BJ (cell line): ENCODE measurements at regions of chr12 and their contacts with region 1.

Region 1: DNA sequence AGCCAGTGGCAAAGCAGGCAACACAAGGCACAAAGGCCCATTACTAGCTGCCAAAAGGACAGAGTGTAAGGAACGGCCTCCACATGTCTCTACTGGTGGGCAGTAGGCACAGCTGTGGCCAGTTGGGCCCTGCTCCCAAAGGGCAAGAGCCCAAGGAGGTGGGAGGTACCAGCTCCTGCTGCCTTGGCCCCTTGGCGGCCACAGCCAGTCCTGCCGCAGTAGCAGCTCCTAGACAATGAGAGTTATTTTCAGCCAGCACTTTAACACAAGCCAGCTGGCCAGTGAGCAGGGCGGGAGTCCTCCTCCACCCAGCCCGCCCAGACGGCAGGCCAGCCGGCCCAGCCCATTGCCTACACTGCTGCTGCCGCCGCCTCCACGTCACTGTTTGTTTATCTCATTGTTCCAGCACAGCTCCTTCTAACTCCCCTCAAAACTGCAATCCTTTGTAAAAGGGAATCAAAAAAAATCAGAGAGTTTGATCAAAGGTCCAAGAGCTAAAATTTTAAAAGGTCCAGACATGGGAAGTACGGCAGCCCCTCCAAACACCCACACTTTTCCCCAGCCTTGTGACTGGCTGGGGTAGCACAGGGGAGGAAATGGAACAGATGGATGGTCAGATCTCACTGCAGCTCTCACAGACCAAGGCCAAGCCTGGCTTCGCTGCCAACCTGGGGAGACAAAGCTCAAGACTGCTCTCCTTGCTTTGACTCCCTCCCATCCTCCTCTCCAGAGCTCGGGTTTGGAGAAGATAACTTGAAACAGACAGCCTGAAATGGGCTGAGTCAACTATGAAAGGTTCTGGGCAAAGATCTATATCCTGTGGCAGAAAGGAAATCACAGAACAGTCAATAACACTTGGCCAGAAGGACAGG is 33.5 kb downstream of the FMNL3 start:
- DNase-seq: peak; percentile 73
- H3K4me3 ChIP-seq: no peak overlapping the region
- H3K27me3 ChIP-seq: no peaks in the 10 kb centered on the region
- CTCF ChIP-seq: peak; percentile 42

Region 2: DNA sequence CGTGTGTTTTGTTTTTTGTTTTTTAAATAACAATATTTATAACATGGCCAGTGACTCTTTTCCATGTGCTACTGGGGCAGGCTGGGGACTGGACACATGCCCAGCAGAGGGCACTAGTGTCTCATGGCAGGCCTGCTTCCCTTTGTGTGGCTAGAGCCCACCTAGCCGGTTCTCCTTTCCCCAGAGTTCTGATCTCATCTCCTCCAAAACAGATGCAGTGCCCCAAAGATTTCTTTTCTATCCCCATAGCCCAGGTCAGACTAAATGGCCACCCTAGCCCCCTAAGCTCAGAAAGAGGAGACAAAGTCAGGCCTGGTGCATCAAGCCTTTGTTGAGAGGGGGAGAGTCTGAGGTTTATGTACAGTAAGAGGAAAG is 29.1 kb before region 1 on chr12:
- CTCF ChIA-PET with region 1: interaction called, 23 read pairs
- POLR2A ChIA-PET with region 1: no interaction called
- DNase-seq: no peak
- H3K4me3 ChIP-seq: no peak overlapping the region
- H3K27me3 ChIP-seq: no peaks in the 10 kb centered on the region
- CTCF ChIP-seq: peak; percentile 96

Region 3: DNA sequence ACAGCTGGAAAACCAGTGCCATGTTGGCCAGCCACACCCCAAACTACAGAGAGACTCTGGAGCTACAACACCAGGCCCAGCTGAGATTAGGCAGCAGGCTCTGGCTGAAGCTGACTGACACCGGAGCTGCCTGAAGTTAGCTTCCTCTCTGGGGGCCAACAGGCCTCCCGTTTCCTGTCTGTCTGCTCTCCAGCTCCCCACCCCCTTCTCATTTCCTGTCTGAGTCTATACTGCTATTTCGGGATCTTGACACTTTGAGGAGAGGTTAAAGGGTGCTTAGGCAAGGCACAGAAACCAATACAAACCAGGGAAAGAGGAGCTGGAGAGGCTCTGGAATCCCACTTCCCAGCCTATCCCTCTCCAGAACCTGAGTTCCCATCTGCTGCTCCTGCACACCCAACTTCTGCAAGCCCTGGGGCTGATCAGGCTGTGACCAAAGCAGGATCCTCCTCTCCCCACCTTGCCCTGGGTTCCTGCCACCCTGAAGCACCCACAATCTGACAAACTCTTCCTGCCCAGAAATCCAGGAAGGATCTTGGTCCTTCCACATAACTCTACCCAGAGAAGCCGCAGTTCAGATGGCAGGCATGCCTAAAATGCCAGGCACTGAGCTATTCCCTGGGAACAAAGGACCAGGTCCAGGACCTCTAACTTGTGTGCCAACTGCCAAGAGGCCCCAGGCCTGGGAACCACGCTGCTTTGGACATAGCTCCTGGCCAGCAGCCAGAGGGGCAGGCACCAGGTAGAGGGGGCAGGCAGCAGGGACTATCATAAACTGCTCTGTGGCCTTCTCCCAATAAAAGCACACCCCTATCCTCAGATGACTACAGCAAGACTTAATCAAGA is 10.5 kb before region 1 on chr12:
- CTCF ChIA-PET with region 1: interaction called, 10 read pairs
- POLR2A ChIA-PET with region 1: interaction called, 5 read pairs
- DNase-seq: peak; percentile 39
- H3K4me3 ChIP-seq: no peak overlapping the region
- H3K27me3 ChIP-seq: no peaks in the 10 kb centered on the region
- CTCF ChIP-seq: no peak

Region 4: GRCh38 chr12:49687941-49688340 is 14.3 kb after region 1 on chr12:
- CTCF ChIA-PET with region 1: interaction called, 12 read pairs
- POLR2A ChIA-PET with region 1: no interaction called
- DNase-seq: no peak
- H3K4me3 ChIP-seq: no peak overlapping the region
- H3K27me3 ChIP-seq: no peaks in the 10 kb centered on the region
- CTCF ChIP-seq: no peak

Region 5: DNA sequence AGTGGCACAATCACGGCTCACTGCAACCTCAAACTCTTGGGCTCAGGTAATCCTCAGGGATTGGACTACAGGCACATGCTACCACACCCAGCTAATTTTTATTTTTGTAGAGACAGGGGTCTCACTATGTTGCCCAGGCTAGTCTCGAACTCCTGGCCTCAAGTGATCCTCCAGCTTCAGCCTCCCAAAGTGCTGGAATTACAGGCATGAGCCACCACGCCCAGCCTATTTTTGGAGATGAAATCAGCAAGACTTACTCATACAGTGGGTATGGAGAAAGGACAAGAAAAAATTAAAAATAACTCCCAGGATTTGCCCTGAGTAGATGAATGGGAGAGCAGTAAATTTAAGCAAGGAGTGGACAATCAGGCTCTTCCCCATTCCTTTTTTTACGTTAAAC is 20.3 kb after region 1 on chr12:
- CTCF ChIA-PET with region 1: interaction called, 16 read pairs
- POLR2A ChIA-PET with region 1: no interaction called
- DNase-seq: no peak
- H3K4me3 ChIP-seq: no peak overlapping the region
- H3K27me3 ChIP-seq: no peaks in the 10 kb centered on the region
- CTCF ChIP-seq: no peak

Region 6: GRCh38 chr12:49707128-49707811 is 33.6 kb after region 1 on chr12 and contains the start of gene FMNL3:
- CTCF ChIA-PET with region 1: interaction called, 18 read pairs
- POLR2A ChIA-PET with region 1: no interaction called
- DNase-seq: peak; percentile 59
- H3K4me3 ChIP-seq: peak within 1 kb of the TSS; percentile 83
- H3K27me3 ChIP-seq: peaks cover 7% of the 10 kb centered on the region
- CTCF ChIP-seq: peak; percentile 91
- polyA plus RNA-seq, gene FMNL3: 10.6 and 13.3 TPM in 2 replicates